HAP-1 (cell line): ENCODE measurements at regions of chr10 and their contacts with region 1.

Region 1: GRCh38 chr10:16848562-16849154 is 31.4 kb upstream of the RSU1 start:
- DNase-seq: no peak
- H3K4me3 ChIP-seq: no peak overlapping the region
- H3K4me1 ChIP-seq: peaks cover 7% of the 10 kb centered on the region
- H3K27me3 ChIP-seq: peaks cover 3% of the 10 kb centered on the region; the same call in 1 of the 2 replicates

Region 2: GRCh38 chr10:17257466-17258321 is 409.0 kb after region 1 on chr10:
- in situ Hi-C with region 1: loop called (anchors 5 kb)
- DNase-seq: peak; percentile 63 to 75
- H3K4me3 ChIP-seq: no peak overlapping the region
- H3K4me1 ChIP-seq: no peaks in the 10 kb centered on the region
- H3K27me3 ChIP-seq: no peaks in the 10 kb centered on the region